Activated T-helper 2 cell treated with anti-CD3 and anti-CD28 coated beads, Interferon-gamma antibody, Interleukin-2, Interleukin-4, amounts not matched to agents 10 μg/mL and 5 μg/mL and 100 μg/mL, durations not matched to agents 14 hours and 24 hours and 36 hours (primary cell): ENCODE measurements at regions of chr4 and their contacts with region 1.

Region 1: GRCh38 chr4:102500696-102501446 is at the start of gene NFKB1:
- DNase-seq: peak; percentile 74
- H3K4me3 Mint-ChIP-seq: peak within 1 kb of the TSS; percentile 96
- H3K27ac Mint-ChIP-seq: peak within 1 kb of the TSS; percentile 89
- H3K4me1 Mint-ChIP-seq: peaks cover 29% of the 10 kb centered on the region
- H3K27me3 Mint-ChIP-seq: no peaks in the 10 kb centered on the region
- total RNA-seq, gene NFKB1: 199 and 205 TPM in 2 replicates

Region 2: GRCh38 chr4:102466298-102466697 is 34.6 kb before region 1 on chr4:
- intact Hi-C with region 1: loop called (anchors 5 kb)
- DNase-seq: no peak
- H3K4me3 Mint-ChIP-seq: no peak overlapping the region
- H3K27ac Mint-ChIP-seq: no peak overlapping the region
- H3K4me1 Mint-ChIP-seq: peaks cover 31% of the 10 kb centered on the region
- H3K27me3 Mint-ChIP-seq: peaks cover 3% of the 10 kb centered on the region

Region 3: DNA sequence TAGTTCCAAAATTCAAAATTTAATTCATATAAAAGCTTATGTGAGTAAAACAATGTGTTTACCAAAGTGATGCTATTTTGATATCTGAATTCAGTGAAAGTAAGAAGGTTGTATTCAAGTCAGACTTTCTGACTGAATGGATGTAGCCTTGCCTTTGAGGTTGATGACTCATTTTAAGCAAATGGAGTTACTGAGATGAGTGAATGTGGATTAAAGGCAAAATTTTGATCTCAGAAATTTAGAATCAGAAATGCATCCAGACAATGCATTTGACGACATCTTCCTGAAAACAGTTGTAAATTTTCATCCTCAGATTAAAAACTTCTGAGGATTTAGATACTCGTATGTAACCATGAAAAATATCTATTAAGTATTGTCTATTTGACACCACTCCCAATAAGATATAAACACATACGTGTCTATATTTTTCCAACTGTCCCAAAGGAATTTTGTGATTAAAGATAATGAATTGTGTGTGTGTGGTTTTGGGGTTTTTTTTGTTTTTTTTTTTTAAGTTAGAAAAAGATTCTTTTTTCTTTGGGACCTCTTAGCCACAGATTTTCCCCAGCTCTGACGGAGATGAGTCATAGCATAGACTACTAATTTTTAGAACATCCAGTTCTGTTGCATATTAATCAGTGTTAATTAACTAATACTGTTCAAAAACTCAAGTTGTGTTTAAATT is 34.7 kb after region 1 on chr4:
- intact Hi-C with region 1: loop called (anchors 1 kb)
- DNase-seq: no peak
- H3K4me3 Mint-ChIP-seq: peak overlapping the region; percentile 5
- H3K27ac Mint-ChIP-seq: peak overlapping the region; percentile 55
- H3K4me1 Mint-ChIP-seq: peaks cover 54% of the 10 kb centered on the region
- H3K27me3 Mint-ChIP-seq: no peaks in the 10 kb centered on the region

Region 4: GRCh38 chr4:102598086-102598761 is 97.4 kb after region 1 on chr4:
- intact Hi-C with region 1: loop called (anchors 5 kb)
- DNase-seq: no peak
- H3K4me3 Mint-ChIP-seq: peak overlapping the region; percentile 57
- H3K27ac Mint-ChIP-seq: peak overlapping the region; percentile 89
- H3K4me1 Mint-ChIP-seq: peaks cover 64% of the 10 kb centered on the region
- H3K27me3 Mint-ChIP-seq: no peaks in the 10 kb centered on the region

Region 5: DNA sequence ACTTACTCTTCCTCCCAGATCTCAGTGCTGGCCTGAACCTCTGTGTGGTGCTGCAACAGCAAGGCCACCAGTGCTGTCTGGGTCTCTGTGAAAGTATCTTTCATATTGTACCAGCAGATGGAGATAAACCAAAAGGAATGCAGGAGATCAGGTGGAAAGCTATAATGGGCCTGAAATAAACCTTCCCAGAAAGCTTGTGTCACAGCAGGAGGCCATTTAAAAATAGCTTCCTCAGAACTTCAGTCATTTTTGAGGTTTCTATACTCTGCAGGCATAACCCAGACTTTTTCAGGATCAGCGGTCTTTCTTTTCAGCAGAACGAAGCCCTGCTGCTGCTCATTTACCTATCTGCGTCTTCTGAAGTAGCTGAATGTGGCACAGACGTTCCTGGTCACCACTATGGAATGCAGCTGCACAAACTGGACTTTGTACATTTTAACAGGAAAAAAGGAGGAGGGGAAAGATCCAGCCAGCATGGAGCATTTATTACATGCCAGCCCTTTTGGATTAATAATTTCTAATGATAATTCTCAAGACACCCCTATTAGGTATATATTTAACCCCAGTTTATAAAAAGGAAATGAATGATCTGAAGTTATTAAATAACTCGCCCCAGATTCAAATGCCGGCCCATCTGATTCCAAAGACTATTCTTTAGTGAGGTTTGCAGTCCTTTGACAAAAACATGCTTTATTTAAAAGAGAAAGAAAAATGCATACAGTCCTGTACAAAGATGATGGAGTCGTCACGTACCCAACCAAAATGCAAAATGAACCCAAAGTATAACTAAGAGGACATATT is 120.0 kb after region 1 on chr4:
- intact Hi-C with region 1: loop called (anchors 2 kb)
- DNase-seq: no peak
- H3K4me3 Mint-ChIP-seq: no peak overlapping the region
- H3K27ac Mint-ChIP-seq: peak overlapping the region; percentile 58
- H3K4me1 Mint-ChIP-seq: peaks cover 49% of the 10 kb centered on the region
- H3K27me3 Mint-ChIP-seq: no peaks in the 10 kb centered on the region

Region 6: DNA sequence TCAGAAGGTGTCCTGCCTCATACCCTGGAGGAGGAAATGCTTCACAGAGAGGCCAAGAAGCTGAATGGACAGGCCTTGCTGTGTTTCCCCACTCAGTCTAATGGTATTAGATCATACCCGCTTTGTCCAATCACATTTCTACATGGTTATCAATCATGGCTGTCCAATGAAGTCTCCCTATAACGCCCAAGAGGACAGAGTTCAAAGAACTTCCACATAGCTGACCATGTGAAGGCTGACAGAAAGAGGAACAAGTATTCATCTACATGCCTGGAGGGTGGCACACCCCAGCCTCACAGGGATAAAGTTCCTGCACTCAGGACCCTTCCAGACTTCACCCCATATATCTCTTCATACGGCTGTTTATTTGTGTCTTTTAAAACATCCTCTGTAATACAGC is 136.5 kb after region 1 on chr4:
- intact Hi-C with region 1: no loop called
- DNase-seq: no peak
- H3K4me3 Mint-ChIP-seq: no peak overlapping the region
- H3K27ac Mint-ChIP-seq: no peak overlapping the region
- H3K4me1 Mint-ChIP-seq: peaks cover 5% of the 10 kb centered on the region
- H3K27me3 Mint-ChIP-seq: no peaks in the 10 kb centered on the region

Region 7: GRCh38 chr4:102696758-102697157 is 195.9 kb after region 1 on chr4:
- intact Hi-C with region 1: no loop called
- DNase-seq: no peak
- H3K4me3 Mint-ChIP-seq: no peak overlapping the region
- H3K27ac Mint-ChIP-seq: no peak overlapping the region
- H3K4me1 Mint-ChIP-seq: peaks cover 2% of the 10 kb centered on the region
- H3K27me3 Mint-ChIP-seq: no peaks in the 10 kb centered on the region